ENCODE measurements at regions of chr14 and their contacts with region 1.

Region 1: GRCh38 chr14:22531451-22532344 is 57.3 kb downstream of the DAD1 start:
- DNase-seq: no peak
- ATAC-seq: peak; percentile 79
- H3K4me3 Mint-ChIP-seq: peak overlapping the region; percentile 80
- H3K27ac Mint-ChIP-seq: peak overlapping the region; percentile 93
- H3K4me1 Mint-ChIP-seq: peaks cover 76% of the 10 kb centered on the region
- H3K27me3 Mint-ChIP-seq: no peaks in the 10 kb centered on the region
- CTCF ChIP-seq: no peak

Region 2: GRCh38 chr14:22478670-22479069 is 53.0 kb before region 1 on chr14:
- CTCF ChIA-PET with region 1: interaction called, 5 read pairs
- POLR2A ChIA-PET with region 1: interaction called, 13 read pairs
- intact Hi-C with region 1: no loop called
- DNase-seq: no peak
- ATAC-seq: no peak
- H3K4me3 Mint-ChIP-seq: peak overlapping the region; percentile 42
- H3K27ac Mint-ChIP-seq: peak overlapping the region; percentile 85
- H3K4me1 Mint-ChIP-seq: peaks cover 98% of the 10 kb centered on the region
- H3K27me3 Mint-ChIP-seq: no peaks in the 10 kb centered on the region
- CTCF ChIP-seq: no peak

Region 3: GRCh38 chr14:22497144-22497423 is 34.6 kb before region 1 on chr14:
- CTCF ChIA-PET with region 1: interaction called, 3 read pairs
- POLR2A ChIA-PET with region 1: interaction called, 7 read pairs
- intact Hi-C with region 1: loop called (anchors 2 kb)
- DNase-seq: no peak
- ATAC-seq: peak; percentile 23
- H3K4me3 Mint-ChIP-seq: peak overlapping the region; percentile 12
- H3K27ac Mint-ChIP-seq: peak overlapping the region; percentile 81
- H3K4me1 Mint-ChIP-seq: peaks cover 69% of the 10 kb centered on the region
- H3K27me3 Mint-ChIP-seq: no peaks in the 10 kb centered on the region
- CTCF ChIP-seq: no peak

Region 4: DNA sequence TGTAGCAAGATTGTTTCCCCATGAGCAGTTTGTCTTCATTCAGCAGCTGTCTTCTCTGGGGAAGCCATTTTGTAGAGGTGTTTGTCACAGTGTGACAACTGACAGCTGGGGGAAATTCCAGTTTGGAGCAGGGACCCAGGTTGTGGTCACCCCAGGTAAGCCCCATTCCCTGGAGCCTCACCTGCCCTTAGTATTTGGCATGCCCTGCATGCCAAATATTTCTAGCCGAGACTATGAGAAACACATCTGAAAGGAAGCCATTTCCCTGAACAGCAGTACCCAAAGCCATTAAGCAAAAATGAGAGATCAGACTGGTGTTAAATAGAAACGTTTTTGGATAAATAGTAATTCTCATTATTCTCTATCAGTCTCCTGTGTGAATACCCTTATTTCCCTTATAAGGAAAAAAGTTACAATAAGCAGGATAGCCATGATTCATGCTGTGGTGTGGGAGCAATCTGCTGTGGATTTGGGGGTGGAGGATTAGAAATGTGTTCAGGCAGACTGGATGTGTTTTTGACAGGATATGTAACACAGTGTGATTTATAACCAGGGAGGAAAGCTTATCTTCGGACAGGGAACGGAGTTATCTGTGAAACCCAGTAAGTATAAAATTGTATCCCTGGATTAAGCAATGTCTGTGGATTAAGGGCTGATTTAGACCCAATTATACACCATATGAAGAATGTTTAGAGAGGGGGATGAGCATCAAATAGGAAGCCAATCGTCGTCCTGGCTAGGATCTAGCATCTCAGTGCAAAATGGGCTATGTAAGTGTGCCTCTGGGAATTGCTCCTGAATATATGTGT is 11.6 kb before region 1 on chr14:
- CTCF ChIA-PET with region 1: interaction called, 6 read pairs
- POLR2A ChIA-PET with region 1: interaction called, 59 read pairs
- intact Hi-C with region 1: loop called (anchors 1 kb)
- DNase-seq: no peak
- ATAC-seq: no peak
- H3K4me3 Mint-ChIP-seq: peak overlapping the region; percentile 52
- H3K27ac Mint-ChIP-seq: peak overlapping the region; percentile 88
- H3K4me1 Mint-ChIP-seq: peaks cover 94% of the 10 kb centered on the region
- H3K27me3 Mint-ChIP-seq: no peaks in the 10 kb centered on the region
- CTCF ChIP-seq: no peak

Region 5: DNA sequence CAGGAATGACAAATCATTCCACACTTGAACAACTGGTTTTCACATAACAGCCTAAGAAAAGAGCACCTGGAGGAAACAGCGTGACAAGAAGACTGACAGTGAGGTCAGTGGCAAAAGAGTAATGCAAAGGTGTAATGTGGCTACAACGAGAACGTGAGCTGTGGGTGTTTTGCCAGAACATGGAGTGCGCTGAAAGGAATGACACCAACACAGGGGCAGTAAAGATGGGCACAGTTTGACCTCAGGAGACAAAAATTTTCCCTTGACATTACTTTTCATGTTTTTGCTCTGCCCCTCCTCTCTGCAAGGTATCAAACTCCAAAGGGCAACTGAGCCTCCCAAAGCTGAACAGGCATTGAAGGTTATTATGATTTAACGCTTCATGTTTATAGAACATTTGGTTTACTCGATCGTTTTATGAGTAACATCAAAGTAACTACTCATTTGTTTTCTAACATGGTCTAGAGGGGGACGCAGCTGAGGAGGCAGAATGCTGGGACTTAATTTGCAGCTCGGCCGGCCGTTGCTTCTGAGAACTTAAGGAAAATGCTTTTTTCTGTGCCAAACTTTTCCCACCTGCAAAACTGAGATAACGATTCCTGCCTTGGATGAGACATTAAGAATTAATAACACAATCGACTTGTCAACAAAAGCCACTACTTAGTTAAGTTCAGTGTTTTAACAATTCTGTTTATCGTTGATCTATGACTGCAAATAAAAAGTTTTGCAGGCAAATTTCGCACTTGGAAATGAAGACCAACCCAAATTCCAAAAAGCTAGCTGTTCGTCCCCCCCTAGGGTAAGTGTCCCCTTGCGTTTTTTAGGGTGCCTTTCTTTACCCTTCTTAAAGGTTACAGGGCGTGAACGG is 424.2 kb after region 1 on chr14:
- CTCF ChIA-PET with region 1: no interaction called
- POLR2A ChIA-PET with region 1: no interaction called
- intact Hi-C with region 1: no loop called
- DNase-seq: no peak
- ATAC-seq: no peak
- H3K4me3 Mint-ChIP-seq: peak overlapping the region; percentile 90
- H3K27ac Mint-ChIP-seq: peak overlapping the region; percentile 86
- H3K4me1 Mint-ChIP-seq: peaks cover 13% of the 10 kb centered on the region
- H3K27me3 Mint-ChIP-seq: no peaks in the 10 kb centered on the region
- CTCF ChIP-seq: no peak

Measured in activated B cell treated with CpG ODN at 0.5 μM for 24 hours (primary cell).